ENCODE measurements at regions of chr12 and their contacts with region 1.

Region 1: GRCh38 chr12:92859650-92860386 is 69.3 kb downstream of the EEA1 start:
- DNase-seq: peak; percentile 81
- H3K4me3 ChIP-seq: peak overlapping the region; percentile 6
- H3K27ac ChIP-seq: peak overlapping the region; percentile 35
- H3K4me1 ChIP-seq: peaks cover 14% of the 10 kb centered on the region
- H3K27me3 ChIP-seq: no peaks in the 10 kb centered on the region
- CTCF ChIP-seq: 0 out of 2 replicates have a peak, but pooled peaks have one; percentile 15

Region 2: GRCh38 chr12:92886131-92886530 is 26.3 kb after region 1 on chr12:
- CTCF ChIA-PET with region 1: no interaction called
- POLR2A ChIA-PET with region 1: interaction called, 18 read pairs
- intact Hi-C with region 1: no loop called
- DNase-seq: no peak
- H3K4me3 ChIP-seq: no peak overlapping the region
- H3K27ac ChIP-seq: no peak overlapping the region
- H3K4me1 ChIP-seq: peaks cover 8% of the 10 kb centered on the region
- H3K27me3 ChIP-seq: no peaks in the 10 kb centered on the region
- CTCF ChIP-seq: no peak

Region 3: GRCh38 chr12:94792693-94793092 is 1932.9 kb after region 1 on chr12:
- CTCF ChIA-PET with region 1: no interaction called
- POLR2A ChIA-PET with region 1: no interaction called
- intact Hi-C with region 1: no loop called
- DNase-seq: no peak
- H3K4me3 ChIP-seq: no peak overlapping the region
- H3K27ac ChIP-seq: no peak overlapping the region
- H3K4me1 ChIP-seq: no peaks in the 10 kb centered on the region
- H3K27me3 ChIP-seq: no peaks in the 10 kb centered on the region
- CTCF ChIP-seq: no peak